WTC11 (cell line): ENCODE measurements at regions of chr15 and their contacts with region 1.

Region 1: DNA sequence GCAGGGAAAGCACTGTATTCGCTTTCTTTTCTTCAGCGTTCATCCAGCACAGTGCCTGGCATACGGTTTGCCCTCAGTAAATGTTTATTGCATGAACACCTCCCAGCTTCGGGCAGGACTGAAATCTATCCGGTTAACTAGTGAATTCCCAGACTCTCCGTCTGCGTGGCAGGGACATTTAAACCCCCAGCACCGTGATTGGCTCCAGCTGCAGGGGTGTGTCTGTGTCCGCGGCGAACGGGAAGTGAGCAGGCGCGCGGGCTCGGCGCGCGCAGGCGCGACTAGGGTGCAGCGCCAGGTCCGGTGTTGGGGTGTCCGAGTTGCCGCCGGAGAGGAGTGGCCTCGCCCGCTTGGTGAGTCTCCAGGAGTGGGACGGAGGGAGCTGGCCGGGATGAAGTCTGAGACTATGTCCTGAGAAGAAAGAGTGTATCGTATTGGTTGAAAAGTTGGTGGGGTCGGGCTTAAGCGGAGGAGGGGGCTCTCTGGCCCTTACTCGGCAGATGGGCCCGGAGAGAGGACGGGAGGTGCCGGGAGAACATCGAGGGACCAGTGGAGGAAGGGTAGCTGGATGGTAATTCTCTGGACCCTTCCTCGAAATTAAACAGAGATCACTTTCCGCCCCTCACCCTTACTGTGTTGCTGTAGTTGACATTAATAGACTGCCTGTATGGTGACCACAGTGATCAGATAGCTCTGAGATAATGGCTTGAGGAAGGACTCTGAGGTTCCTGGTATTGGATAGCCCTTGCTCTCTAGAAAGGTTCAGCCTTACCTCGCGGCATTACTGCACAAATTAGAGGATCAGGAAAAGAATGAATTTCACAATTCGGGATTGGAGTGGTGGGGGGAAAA is at the start of gene SNAP23:
- DNase-seq: peak; percentile 91
- ATAC-seq: peak; percentile 92
- H3K4me3 Mint-ChIP-seq: peak within 1 kb of the TSS; percentile 92
- H3K27ac Mint-ChIP-seq: peak within 1 kb of the TSS; percentile 94
- H3K4me1 Mint-ChIP-seq: peaks cover 45% of the 10 kb centered on the region
- H3K27me3 Mint-ChIP-seq: no peaks in the 10 kb centered on the region
- CTCF ChIP-seq: no peak
- total RNA-seq, gene SNAP23: 58.2 to 68.3 TPM (median 63.7 TPM) in 3 replicates

Region 2: GRCh38 chr15:42359986-42360385 is 135.6 kb before region 1 on chr15:
- CTCF ChIA-PET with region 1: no interaction called
- POLR2A ChIA-PET with region 1: no interaction called
- DNase-seq: no peak
- ATAC-seq: no peak
- H3K4me3 Mint-ChIP-seq: no peak overlapping the region
- H3K27ac Mint-ChIP-seq: no peak overlapping the region
- H3K4me1 Mint-ChIP-seq: peaks cover 31% of the 10 kb centered on the region
- H3K27me3 Mint-ChIP-seq: peaks cover 14% of the 10 kb centered on the region
- CTCF ChIP-seq: no peak

Region 3: DNA sequence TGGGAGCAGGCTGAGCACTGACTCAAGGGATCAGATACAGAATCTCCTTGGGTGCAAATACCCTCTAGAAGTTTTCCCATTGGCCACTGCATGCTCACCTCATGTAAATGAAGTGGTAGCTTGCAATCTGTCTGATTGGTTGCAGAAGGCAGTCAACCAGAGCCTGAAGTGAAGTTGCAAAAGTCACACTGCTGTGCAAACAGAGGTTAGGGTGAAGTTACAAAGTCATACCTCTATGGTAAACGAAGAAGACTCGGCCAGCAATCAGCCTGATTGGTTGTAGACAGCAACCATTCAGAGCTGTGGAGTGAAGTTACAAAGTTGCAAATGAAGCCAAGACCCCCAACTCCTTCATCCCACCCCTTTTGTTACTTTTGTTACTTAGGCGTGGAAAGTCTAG is 106.9 kb after region 1 on chr15:
- CTCF ChIA-PET with region 1: no interaction called
- POLR2A ChIA-PET with region 1: no interaction called
- DNase-seq: no peak
- ATAC-seq: no peak
- H3K4me3 Mint-ChIP-seq: no peak overlapping the region
- H3K27ac Mint-ChIP-seq: no peak overlapping the region
- H3K4me1 Mint-ChIP-seq: no peaks in the 10 kb centered on the region
- H3K27me3 Mint-ChIP-seq: no peaks in the 10 kb centered on the region
- CTCF ChIP-seq: no peak

Region 4: GRCh38 chr15:42726114-42726513 is 230.5 kb after region 1 on chr15:
- CTCF ChIA-PET with region 1: no interaction called
- POLR2A ChIA-PET with region 1: interaction called, 10 read pairs
- DNase-seq: no peak
- ATAC-seq: no peak
- H3K4me3 Mint-ChIP-seq: no peak overlapping the region
- H3K27ac Mint-ChIP-seq: no peak overlapping the region
- H3K4me1 Mint-ChIP-seq: peaks cover 17% of the 10 kb centered on the region
- H3K27me3 Mint-ChIP-seq: no peaks in the 10 kb centered on the region
- CTCF ChIP-seq: no peak